SK-N-SH (cell line): ENCODE measurements at regions of chr17 and their contacts with region 1.

Region 1: GRCh38 chr17:28763804-28764266 is 20.0 kb downstream of the TRAF4 start:
- DNase-seq: peak; percentile 78
- H3K4me3 ChIP-seq: no peak overlapping the region
- H3K27ac ChIP-seq: peak overlapping the region in 1 of 2 experiments; percentile 0; a peak in 1 of 4 replicates
- H3K4me1 ChIP-seq: peaks cover 0 to 19% of the 10 kb centered on the region in 2 experiments; a peak in 1 of 4 replicates
- H3K27me3 ChIP-seq: no peaks in the 10 kb centered on the region
- CTCF ChIP-seq: peak; percentile 96
- EP300 ChIP-seq: no peak
- RAD21 ChIP-seq: peak; percentile 81

Region 2: GRCh38 chr17:28585851-28586250 is 178.0 kb before region 1 on chr17:
- CTCF ChIA-PET with region 1: no interaction called
- POLR2A ChIA-PET with region 1: no interaction called
- DNase-seq: no peak
- H3K4me3 ChIP-seq: no peak overlapping the region
- H3K27ac ChIP-seq: no peak overlapping the region
- H3K4me1 ChIP-seq: no peaks in the 10 kb centered on the region
- H3K27me3 ChIP-seq: no peaks in the 10 kb centered on the region
- CTCF ChIP-seq: no peak
- EP300 ChIP-seq: no peak
- RAD21 ChIP-seq: no peak

Region 3: DNA sequence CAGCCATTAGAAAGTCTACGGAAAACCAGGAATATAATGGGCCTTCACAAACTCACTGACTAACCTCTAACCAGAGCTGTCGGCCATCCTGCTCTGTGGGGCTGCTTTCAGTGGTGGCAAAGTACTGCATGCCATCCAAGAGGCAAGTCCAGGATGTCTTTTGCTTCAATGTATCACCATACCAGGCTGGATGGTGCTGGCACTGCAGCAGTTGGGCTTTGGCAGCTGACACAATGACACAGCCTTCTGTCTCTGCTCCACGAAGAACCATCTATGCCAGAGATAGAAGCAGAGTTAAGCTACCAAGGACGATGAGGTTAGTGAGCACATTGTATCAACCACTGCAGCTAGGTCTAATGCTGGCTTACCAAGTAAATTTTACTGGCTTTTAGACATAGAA is 140.1 kb before region 1 on chr17:
- CTCF ChIA-PET with region 1: no interaction called
- POLR2A ChIA-PET with region 1: no interaction called
- DNase-seq: no peak
- H3K4me3 ChIP-seq: no peak overlapping the region
- H3K27ac ChIP-seq: no peak overlapping the region
- H3K4me1 ChIP-seq: no peaks in the 10 kb centered on the region
- H3K27me3 ChIP-seq: no peaks in the 10 kb centered on the region
- CTCF ChIP-seq: no peak
- EP300 ChIP-seq: no peak
- RAD21 ChIP-seq: no peak

Region 4: DNA sequence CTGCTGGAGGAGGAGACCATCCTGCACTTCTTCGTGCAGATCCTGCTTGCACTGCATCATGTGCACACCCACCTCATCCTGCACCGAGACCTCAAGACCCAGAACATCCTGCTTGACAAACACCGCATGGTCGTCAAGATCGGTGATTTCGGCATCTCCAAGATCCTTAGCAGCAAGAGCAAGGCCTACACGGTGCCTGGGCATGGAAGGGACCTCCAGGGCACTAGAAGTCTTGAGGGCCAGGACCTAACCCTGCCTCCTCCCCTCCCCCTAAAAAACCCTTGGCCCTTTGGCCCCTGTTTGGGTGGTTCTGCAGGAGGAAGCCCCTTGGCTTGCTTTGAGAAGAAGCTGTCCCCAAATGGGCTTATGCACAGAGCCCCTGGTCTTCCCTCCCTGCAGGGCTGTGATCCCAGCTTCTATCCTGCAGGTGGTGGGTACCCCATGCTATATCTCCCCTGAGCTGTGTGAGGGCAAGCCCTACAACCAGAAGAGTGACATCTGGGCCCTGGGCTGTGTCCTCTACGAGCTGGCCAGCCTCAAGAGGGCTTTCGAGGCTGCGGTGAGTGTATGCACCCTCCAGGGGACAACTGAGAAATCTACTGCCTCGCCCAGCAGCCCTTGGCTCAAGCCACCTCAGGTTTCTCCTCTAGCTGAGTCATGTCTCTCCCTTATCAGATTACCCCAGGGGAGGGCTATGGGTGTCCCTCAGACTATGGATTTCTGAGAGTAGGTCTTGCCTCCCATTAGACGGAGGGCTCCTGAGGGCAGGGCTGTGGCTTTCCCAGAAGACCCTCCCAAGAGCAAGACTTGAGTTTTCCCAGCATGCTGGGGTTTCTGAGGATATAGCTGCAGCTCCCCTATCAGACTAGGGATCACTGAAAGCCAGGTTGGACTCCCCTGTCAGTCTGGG is 28.8 kb before region 1 on chr17:
- CTCF ChIA-PET with region 1: no interaction called
- POLR2A ChIA-PET with region 1: no interaction called
- DNase-seq: no peak
- H3K4me3 ChIP-seq: no peak overlapping the region
- H3K27ac ChIP-seq: no peak overlapping the region
- H3K4me1 ChIP-seq: no peaks in the 10 kb centered on the region
- H3K27me3 ChIP-seq: no peaks in the 10 kb centered on the region
- CTCF ChIP-seq: no peak
- EP300 ChIP-seq: no peak
- RAD21 ChIP-seq: no peak

Region 5: GRCh38 chr17:28777178-28777577 is 13.3 kb after region 1 on chr17:
- CTCF ChIA-PET with region 1: interaction called, 82 read pairs
- POLR2A ChIA-PET with region 1: no interaction called
- DNase-seq: no peak
- H3K4me3 ChIP-seq: no peak overlapping the region
- H3K27ac ChIP-seq: no peak overlapping the region
- H3K4me1 ChIP-seq: no peaks in the 10 kb centered on the region
- H3K27me3 ChIP-seq: no peaks in the 10 kb centered on the region
- CTCF ChIP-seq: no peak
- EP300 ChIP-seq: no peak
- RAD21 ChIP-seq: no peak

Region 6: GRCh38 chr17:28842282-28843012 is 78.6 kb after region 1 on chr17 and contains the start of gene FAM222B:
- CTCF ChIA-PET with region 1: interaction called, 27 read pairs
- POLR2A ChIA-PET with region 1: no interaction called
- DNase-seq: peak; percentile 99
- H3K4me3 ChIP-seq: peak within 1 kb of the TSS; percentile 70 to 91
- H3K27ac ChIP-seq: peak within 1 kb of the TSS; percentile 58 to 73
- H3K4me1 ChIP-seq: peaks cover 3 to 5% of the 10 kb centered on the region in 2 experiments; a peak in 1 of 4 replicates
- H3K27me3 ChIP-seq: no peaks in the 10 kb centered on the region
- CTCF ChIP-seq: no peak
- EP300 ChIP-seq: no peak
- RAD21 ChIP-seq: no peak
- polyA plus RNA-seq, gene FAM222B: 5.8 and 9.0 TPM in 2 replicates

Region 7: GRCh38 chr17:28892024-28892423 is 128.2 kb after region 1 on chr17:
- CTCF ChIA-PET with region 1: interaction called, 95 read pairs
- POLR2A ChIA-PET with region 1: interaction called, 3 read pairs
- DNase-seq: no peak
- H3K4me3 ChIP-seq: no peak overlapping the region
- H3K27ac ChIP-seq: no peak overlapping the region
- H3K4me1 ChIP-seq: peaks cover 8 to 13% of the 10 kb centered on the region in 2 experiments; a peak in 2 of 4 replicates
- H3K27me3 ChIP-seq: no peaks in the 10 kb centered on the region
- CTCF ChIP-seq: no peak
- EP300 ChIP-seq: no peak
- RAD21 ChIP-seq: no peak

Region 8: GRCh38 chr17:28937044-28937729 is 173.4 kb after region 1 on chr17:
- CTCF ChIA-PET with region 1: interaction called, 14 read pairs
- POLR2A ChIA-PET with region 1: no interaction called
- DNase-seq: no peak
- H3K4me3 ChIP-seq: no peak overlapping the region
- H3K27ac ChIP-seq: no peak overlapping the region
- H3K4me1 ChIP-seq: peaks cover 0 to 26% of the 10 kb centered on the region in 2 experiments; a peak in 2 of 4 replicates
- H3K27me3 ChIP-seq: no peaks in the 10 kb centered on the region
- CTCF ChIP-seq: no peak
- EP300 ChIP-seq: no peak
- RAD21 ChIP-seq: no peak

Region 9: DNA sequence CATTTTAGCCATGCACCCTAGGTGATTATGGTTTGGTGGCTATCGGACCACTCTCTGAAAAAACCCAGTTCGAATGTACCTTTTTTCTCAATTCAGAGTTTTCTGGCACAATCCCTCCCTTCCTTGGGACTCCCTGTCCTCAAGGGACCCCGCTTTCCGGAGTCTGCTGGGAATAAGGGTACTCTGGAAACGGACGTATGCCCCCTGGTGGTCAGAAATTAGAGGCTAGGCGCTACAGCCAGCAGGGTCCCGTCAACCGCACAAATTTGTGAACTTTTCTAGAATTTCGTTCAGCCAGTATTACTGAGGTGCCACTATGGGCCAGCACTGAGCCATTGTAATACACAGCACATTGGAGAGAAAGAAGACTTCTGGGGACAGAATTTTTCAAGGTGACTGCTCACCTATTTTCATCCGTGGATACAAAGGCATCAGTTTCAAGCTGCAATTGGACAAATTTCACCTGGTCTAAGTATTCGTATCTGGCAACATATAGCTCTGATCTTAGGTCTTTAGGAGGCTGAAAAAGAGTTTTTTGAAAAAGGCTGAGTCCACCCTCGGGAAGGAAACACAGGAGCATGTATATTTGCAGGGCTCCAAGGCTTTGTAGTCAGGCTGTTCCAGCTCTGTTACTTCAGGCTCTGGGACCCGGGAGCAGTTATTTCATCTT is 455.7 kb after region 1 on chr17:
- CTCF ChIA-PET with region 1: no interaction called
- POLR2A ChIA-PET with region 1: no interaction called
- DNase-seq: peak; percentile 86
- H3K4me3 ChIP-seq: peak overlapping the region in 1 of 2 experiments; percentile 17; a peak in 1 of 4 replicates
- H3K27ac ChIP-seq: no peak overlapping the region
- H3K4me1 ChIP-seq: peaks cover 0 to 6% of the 10 kb centered on the region in 2 experiments; a peak in 1 of 4 replicates
- H3K27me3 ChIP-seq: no peaks in the 10 kb centered on the region
- CTCF ChIP-seq: peak; percentile 97
- EP300 ChIP-seq: no peak; a peak in 1 of 4 replicates
- RAD21 ChIP-seq: peak; percentile 75